ENCODE measurements at regions of chrX and their contacts with region 1.

Region 1: DNA sequence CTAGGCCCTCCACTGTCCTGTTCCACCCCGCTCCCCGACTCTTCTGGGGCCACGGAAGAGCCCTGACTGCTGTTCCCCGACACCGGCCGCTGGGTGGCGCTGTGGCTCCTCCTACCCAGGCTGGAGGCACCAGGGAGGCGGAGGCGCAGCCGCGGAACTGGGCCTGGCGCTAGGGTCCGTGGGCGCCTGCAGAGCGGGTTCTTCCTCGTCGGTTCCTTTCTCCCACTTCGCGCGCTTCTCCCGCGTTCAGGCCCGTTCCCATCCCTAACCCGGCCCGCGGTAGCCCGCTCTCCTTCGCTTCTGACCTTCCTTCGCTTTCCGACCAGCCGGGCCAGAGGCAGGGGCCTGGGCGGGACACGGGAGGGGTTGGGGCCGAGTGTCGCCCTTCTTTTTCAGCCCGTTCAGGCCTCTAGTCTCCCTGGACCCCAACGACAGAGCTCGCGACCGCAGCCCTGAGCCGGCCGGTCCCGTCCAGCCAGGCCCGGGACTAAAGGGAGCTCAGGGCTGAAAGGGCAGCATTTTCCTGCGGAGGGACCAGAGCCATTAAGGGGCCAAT is 34.3 kb downstream of the NALF2 start:
- DNase-seq: peak; percentile 63 to 77 (median 76)
- ATAC-seq: peak; percentile 100
- H3K4me3 ChIP-seq: no peak overlapping the region
- H3K27ac ChIP-seq: no peak overlapping the region
- H3K4me1 ChIP-seq: peaks cover 0 to 7% of the 10 kb centered on the region in 2 experiments; a peak in 2 of 5 replicates
- H3K27me3 ChIP-seq: peaks cover 0 to 4% of the 10 kb centered on the region in 2 experiments; a peak in 1 of 5 replicates
- CTCF ChIP-seq: peak; percentile 69 to 84 (median 74)
- EP300 ChIP-seq: no peak
- POLR2A ChIP-seq: no peak
- RAD21 ChIP-seq: peak; percentile 61 to 71

Region 2: GRCh38 chrX:69466546-69466945 is 71.9 kb before region 1 on chrX:
- CTCF ChIA-PET with region 1: no interaction called
- POLR2A ChIA-PET with region 1: no interaction called
- in situ Hi-C with region 1: no loop called
- intact Hi-C with region 1: no loop called
- DNase-seq: no peak
- ATAC-seq: no peak
- H3K4me3 ChIP-seq: no peak overlapping the region
- H3K27ac ChIP-seq: no peak overlapping the region
- H3K4me1 ChIP-seq: no peaks in the 10 kb centered on the region
- H3K27me3 ChIP-seq: no peaks in the 10 kb centered on the region
- CTCF ChIP-seq: no peak
- EP300 ChIP-seq: no peak
- POLR2A ChIP-seq: no peak
- RAD21 ChIP-seq: no peak

Region 3: GRCh38 chrX:69618803-69619202 is 80.4 kb after region 1 on chrX:
- CTCF ChIA-PET with region 1: interaction called, 5 read pairs
- POLR2A ChIA-PET with region 1: no interaction called
- in situ Hi-C with region 1: no loop called
- intact Hi-C with region 1: loop called (anchors 1 kb)
- DNase-seq: peak in 1 of 4 experiments; percentile 3
- ATAC-seq: no peak
- H3K4me3 ChIP-seq: no peak overlapping the region
- H3K27ac ChIP-seq: no peak overlapping the region
- H3K4me1 ChIP-seq: peaks cover 0 to 13% of the 10 kb centered on the region in 2 experiments; a peak in 2 of 5 replicates
- H3K27me3 ChIP-seq: peaks cover 0 to 6% of the 10 kb centered on the region in 2 experiments; a peak in 1 of 5 replicates
- CTCF ChIP-seq: peak in 2 of 3 experiments; percentile 4 to 46; a peak in 3 of 6 replicates
- EP300 ChIP-seq: no peak
- POLR2A ChIP-seq: no peak
- RAD21 ChIP-seq: peak; percentile 31 to 50; a peak in 2 of 4 replicates

Region 4: DNA sequence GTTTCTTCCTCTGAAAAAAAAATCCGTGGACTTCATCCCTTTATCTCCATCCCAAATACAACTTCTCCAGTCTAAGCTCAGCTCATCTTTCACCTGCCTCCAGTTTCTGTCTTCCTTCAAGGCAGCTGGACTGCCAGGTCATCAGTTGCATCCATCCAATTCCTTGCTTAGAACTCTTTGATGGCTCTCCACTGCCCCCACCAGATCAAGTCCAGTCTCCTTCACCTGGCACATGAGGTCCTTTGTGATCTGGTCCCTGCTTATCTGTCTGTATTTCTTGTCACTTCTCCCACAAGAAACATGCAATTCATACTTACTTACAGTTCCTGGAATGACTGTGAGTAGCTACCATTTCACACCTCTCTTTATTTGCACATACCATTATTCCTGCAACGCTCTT is 557.7 kb after region 1 on chrX:
- CTCF ChIA-PET with region 1: interaction called, 5 read pairs
- POLR2A ChIA-PET with region 1: no interaction called
- in situ Hi-C with region 1: no loop called
- intact Hi-C with region 1: loop called (anchors 1 kb)
- DNase-seq: peak; percentile 11 to 21 (median 14)
- ATAC-seq: peak; percentile 72
- H3K4me3 ChIP-seq: no peak overlapping the region
- H3K27ac ChIP-seq: no peak overlapping the region
- H3K4me1 ChIP-seq: no peaks in the 10 kb centered on the region; a peak in 1 of 5 replicates
- H3K27me3 ChIP-seq: no peaks in the 10 kb centered on the region
- CTCF ChIP-seq: peak; percentile 28 to 30 (median 29); a peak in 3 of 6 replicates
- EP300 ChIP-seq: no peak
- POLR2A ChIP-seq: no peak
- RAD21 ChIP-seq: peak in 1 of 2 experiments; percentile 29; a peak in 1 of 4 replicates